T-cell (primary cell): ENCODE measurements at regions of chr2 and their contacts with region 1.

Region 1: DNA sequence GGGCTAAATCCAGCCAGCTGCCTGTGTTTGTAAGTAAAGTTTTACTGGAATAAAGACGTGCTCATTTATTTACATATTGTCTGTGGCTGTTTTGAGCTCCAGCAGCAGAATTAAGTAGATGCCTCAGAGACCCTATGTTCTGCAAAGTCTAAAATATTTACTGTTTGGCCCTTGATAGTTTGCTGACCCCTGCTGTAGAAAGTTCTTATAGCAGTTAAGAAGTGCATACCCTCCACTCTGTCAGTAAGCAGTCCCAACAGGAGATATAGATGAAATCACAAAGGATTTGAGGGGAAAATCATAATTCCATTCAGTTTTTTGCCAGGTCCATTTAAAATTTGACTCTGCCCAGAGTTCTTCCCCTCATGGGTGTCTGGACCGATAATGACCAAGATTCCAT is 50.1 kb upstream of the ITM2C start:
- DNase-seq: peak in 1 of 35 experiments; percentile 32
- ATAC-seq: no peak
- H3K4me3 ChIP-seq: no peak overlapping the region
- H3K4me3 Mint-ChIP-seq: no peak overlapping the region
- H3K27ac ChIP-seq: no peak overlapping the region
- H3K27ac Mint-ChIP-seq: peak overlapping the region in 1 of 2 donors; percentile 53
- H3K4me1 ChIP-seq: peaks cover 0 to 7% of the 10 kb centered on the region in 2 experiments
- H3K4me1 Mint-ChIP-seq: peaks cover 9 to 17% (median 15%) of the 10 kb centered on the region in 3 donors
- H3K27me3 ChIP-seq: no peaks in the 10 kb centered on the region
- H3K27me3 Mint-ChIP-seq: no peaks in the 10 kb centered on the region

Region 2: DNA sequence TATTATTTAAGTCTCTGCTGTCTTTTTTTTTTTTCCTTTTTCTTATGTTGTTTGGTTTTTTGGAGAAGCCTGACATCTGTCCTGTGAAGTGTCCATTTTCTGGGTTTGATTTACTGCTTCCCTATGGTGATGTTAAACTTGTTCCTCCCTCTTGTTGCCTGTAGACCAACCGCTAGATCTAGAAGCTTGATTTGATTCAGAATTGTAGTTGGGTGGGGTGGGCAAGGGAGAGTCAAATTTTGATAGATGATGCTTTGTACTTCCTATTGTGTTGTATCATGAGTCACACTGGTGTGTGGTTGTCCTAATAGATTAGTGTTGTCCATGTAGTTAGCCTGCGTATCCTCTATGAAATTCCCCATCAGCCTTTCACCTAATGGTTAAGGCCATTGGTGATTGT is 66.5 kb before region 1 on chr2:
- CTCF ChIA-PET with region 1: no interaction called
- POLR2A ChIA-PET with region 1: interaction called in 1 of 2 experiments, 10 read pairs
- DNase-seq: no peak
- ATAC-seq: no peak
- H3K4me3 ChIP-seq: no peak overlapping the region
- H3K4me3 Mint-ChIP-seq: no peak overlapping the region
- H3K27ac ChIP-seq: no peak overlapping the region
- H3K27ac Mint-ChIP-seq: no peak overlapping the region
- H3K4me1 ChIP-seq: peaks cover under 1 to 2% of the 10 kb centered on the region in 2 experiments
- H3K4me1 Mint-ChIP-seq: peaks cover 70 to 76% (median 74%) of the 10 kb centered on the region in 3 donors
- H3K27me3 ChIP-seq: no peaks in the 10 kb centered on the region
- H3K27me3 Mint-ChIP-seq: no peaks in the 10 kb centered on the region